ENCODE measurements at regions of chr19 and their contacts with region 1.

Region 1: GRCh38 chr19:35352448-35353304 is 5.0 kb downstream of the FFAR1 start:
- DNase-seq: peak; percentile 54
- ATAC-seq: peak; percentile 46
- H3K4me3 Mint-ChIP-seq: no peak overlapping the region
- H3K27ac Mint-ChIP-seq: peak overlapping the region; percentile 26
- H3K4me1 Mint-ChIP-seq: peaks cover 40% of the 10 kb centered on the region
- H3K27me3 Mint-ChIP-seq: no peaks in the 10 kb centered on the region
- CTCF ChIP-seq: peak; percentile 23

Region 2: DNA sequence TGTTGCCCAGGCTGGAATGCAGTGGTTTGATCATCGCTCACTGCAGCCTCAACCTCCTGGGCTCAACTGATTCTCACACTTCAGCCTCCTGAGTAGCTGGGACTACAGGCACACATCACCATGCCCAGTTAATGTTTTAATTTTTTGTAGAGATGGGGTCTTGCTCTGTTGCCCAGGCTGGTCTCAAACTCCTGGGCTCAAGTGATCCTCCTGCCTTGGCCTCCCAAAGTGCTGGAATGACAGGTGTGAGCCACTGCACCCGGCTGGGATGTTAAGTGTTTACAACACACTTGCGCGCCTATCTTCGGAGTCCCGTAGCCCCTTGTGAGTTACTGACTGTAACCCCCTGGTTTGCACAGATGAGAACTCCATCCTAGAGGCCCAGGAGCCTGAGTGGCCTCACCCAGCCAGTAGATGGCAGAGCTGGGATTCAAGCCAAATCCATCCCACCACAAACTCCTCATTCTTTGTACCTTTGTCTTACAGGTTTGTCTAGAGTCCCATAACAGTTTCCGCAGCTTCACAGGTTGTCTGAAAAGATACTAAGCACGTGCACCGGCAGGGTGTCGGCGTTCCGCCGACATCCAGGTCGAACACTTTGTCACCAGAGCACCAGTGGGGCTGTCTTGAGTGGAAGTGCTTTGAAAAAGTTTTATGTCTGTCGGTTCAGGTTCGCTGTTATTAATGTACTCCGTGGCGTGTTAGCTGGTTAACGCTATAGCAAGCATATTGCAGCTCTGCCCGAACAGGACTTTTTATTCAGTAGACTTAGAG is 46.0 kb before region 1 on chr19:
- CTCF ChIA-PET with region 1: interaction called, 3 read pairs
- POLR2A ChIA-PET with region 1: interaction called, 5 read pairs
- intact Hi-C with region 1: loop called (anchors 2 kb)
- DNase-seq: no peak
- ATAC-seq: peak; percentile 60
- H3K4me3 Mint-ChIP-seq: no peak overlapping the region
- H3K27ac Mint-ChIP-seq: peak overlapping the region; percentile 12
- H3K4me1 Mint-ChIP-seq: peaks cover 56% of the 10 kb centered on the region
- H3K27me3 Mint-ChIP-seq: no peaks in the 10 kb centered on the region
- CTCF ChIP-seq: no peak

Region 3: GRCh38 chr19:35375505-35376307 is 23.0 kb after region 1 on chr19:
- CTCF ChIA-PET with region 1: interaction called, 4 read pairs
- POLR2A ChIA-PET with region 1: no interaction called
- intact Hi-C with region 1: loop called (anchors 2 kb)
- DNase-seq: no peak
- ATAC-seq: no peak
- H3K4me3 Mint-ChIP-seq: no peak overlapping the region
- H3K27ac Mint-ChIP-seq: no peak overlapping the region
- H3K4me1 Mint-ChIP-seq: peaks cover 27% of the 10 kb centered on the region
- H3K27me3 Mint-ChIP-seq: no peaks in the 10 kb centered on the region
- CTCF ChIP-seq: no peak

Region 4: GRCh38 chr19:35468637-35469036 is 116.0 kb after region 1 on chr19:
- CTCF ChIA-PET with region 1: interaction called, 99 read pairs
- POLR2A ChIA-PET with region 1: interaction called, 76 read pairs
- intact Hi-C with region 1: loop called (anchors 1 kb)
- DNase-seq: peak; percentile 51
- ATAC-seq: peak; percentile 100
- H3K4me3 Mint-ChIP-seq: no peak overlapping the region
- H3K27ac Mint-ChIP-seq: no peak overlapping the region
- H3K4me1 Mint-ChIP-seq: peaks cover 14% of the 10 kb centered on the region
- H3K27me3 Mint-ChIP-seq: no peaks in the 10 kb centered on the region
- CTCF ChIP-seq: peak; percentile 39

Region 5: DNA sequence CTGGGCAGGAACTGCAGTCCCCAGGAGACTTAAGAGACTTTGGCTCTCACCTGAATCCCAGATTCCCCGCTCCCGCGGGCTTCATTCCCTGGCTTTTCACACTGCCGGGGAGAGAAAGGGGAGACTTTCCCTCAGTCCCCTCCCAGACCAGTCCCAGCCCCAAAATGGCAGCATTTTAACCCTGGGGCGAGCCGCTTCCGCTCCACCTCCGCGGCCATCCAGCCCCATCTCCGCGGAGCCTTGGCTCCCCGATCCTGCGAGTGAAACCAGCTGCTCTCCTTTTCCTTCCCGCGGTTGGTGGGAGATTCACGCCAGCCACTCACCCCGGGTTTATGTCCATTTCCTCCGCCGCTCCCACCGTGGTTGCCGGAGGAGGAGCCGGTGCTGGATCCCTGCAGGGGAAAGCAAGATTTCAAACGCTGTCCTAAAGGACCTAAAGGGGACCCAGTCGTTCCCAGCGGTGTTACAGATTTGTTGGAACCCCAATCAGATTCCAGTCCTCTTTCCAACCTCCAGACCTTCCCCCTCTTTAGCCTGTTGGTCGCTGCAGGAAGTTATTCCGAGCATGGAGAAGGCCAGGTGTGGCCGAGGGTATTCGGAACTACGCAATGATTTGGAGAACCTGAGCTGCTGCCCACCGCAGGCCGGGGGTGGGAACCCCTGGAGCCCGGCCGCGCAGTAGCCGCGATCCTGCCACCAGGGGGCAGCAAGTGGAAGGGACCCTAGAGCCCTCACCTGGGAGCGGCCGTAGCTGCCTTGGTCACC is 157.4 kb after region 1 on chr19:
- CTCF ChIA-PET with region 1: interaction called, 10 read pairs
- POLR2A ChIA-PET with region 1: no interaction called
- intact Hi-C with region 1: no loop called
- DNase-seq: peak; percentile 76
- ATAC-seq: peak; percentile 91
- H3K4me3 Mint-ChIP-seq: peak overlapping the region; percentile 73
- H3K27ac Mint-ChIP-seq: no peak overlapping the region
- H3K4me1 Mint-ChIP-seq: peaks cover 17% of the 10 kb centered on the region
- H3K27me3 Mint-ChIP-seq: peaks cover 53% of the 10 kb centered on the region
- CTCF ChIP-seq: peak; percentile 86

Region 6: DNA sequence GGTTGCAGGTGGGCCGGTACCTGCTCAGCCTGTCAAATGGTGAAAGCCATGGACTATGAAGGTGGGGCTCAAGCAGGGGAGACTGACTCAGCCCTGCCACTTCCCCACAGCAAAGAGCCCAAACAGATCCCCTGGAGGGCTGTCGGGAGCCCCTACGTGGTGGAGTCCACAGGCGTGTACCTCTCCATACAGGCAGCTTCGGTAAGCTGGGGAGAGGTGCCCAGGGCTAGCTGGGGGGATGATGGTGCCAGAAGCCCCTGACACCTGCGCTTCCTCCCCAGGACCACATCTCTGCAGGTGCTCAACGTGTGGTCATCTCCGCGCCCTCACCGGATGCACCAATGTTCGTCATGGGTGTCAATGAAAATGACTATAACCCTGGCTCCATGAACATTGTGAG is 189.5 kb after region 1 on chr19:
- CTCF ChIA-PET with region 1: no interaction called
- POLR2A ChIA-PET with region 1: no interaction called
- intact Hi-C with region 1: no loop called
- DNase-seq: no peak
- ATAC-seq: no peak
- H3K4me3 Mint-ChIP-seq: no peak overlapping the region
- H3K27ac Mint-ChIP-seq: no peak overlapping the region
- H3K4me1 Mint-ChIP-seq: peaks cover 33% of the 10 kb centered on the region
- H3K27me3 Mint-ChIP-seq: no peaks in the 10 kb centered on the region
- CTCF ChIP-seq: no peak